ENCODE measurements at regions of chr2 and their contacts with region 1.

Region 1: GRCh38 chr2:127081826-127082633 is 24.9 kb downstream of the BIN1 start:
- DNase-seq: peak; percentile 87
- H3K4me3 Mint-ChIP-seq: peak overlapping the region; percentile 88
- H3K27ac Mint-ChIP-seq: peak overlapping the region; percentile 92
- H3K4me1 Mint-ChIP-seq: peaks cover 83% of the 10 kb centered on the region
- H3K27me3 Mint-ChIP-seq: no peaks in the 10 kb centered on the region

Region 2: DNA sequence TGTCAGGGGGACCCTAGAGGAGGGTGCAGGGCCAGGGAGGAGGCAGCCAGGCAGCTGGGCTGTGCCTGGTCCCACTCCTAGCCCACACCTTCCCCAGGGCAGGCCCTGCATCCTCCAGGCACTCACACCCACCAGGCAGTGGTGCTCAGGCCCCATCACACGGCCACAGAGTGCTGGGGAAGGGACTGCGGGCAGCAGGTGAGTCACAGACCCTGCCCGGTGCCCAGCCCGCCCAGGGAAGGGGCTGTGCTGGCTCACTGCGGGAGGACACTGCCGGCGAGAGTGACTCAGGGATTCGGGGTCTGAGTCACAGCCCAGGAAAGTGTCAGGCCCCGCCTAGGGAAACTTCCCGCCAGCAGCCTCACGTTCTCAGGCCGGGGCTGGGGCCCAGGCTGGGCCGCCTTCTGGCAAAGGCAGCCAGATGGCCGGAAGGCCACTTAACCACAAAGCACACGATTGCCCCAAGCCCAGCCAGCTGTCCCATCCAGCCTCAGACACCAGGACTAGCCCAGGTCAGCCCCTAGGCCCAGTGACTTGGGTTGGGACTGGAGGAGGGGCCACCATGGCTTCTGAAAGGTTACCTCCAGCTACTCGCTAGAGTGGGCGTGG is 17.3 kb before region 1 on chr2:
- CTCF ChIA-PET with region 1: interaction called, 101 read pairs
- POLR2A ChIA-PET with region 1: no interaction called
- DNase-seq: peak; percentile 46
- H3K4me3 Mint-ChIP-seq: no peak overlapping the region
- H3K27ac Mint-ChIP-seq: no peak overlapping the region
- H3K4me1 Mint-ChIP-seq: peaks cover 13% of the 10 kb centered on the region
- H3K27me3 Mint-ChIP-seq: no peaks in the 10 kb centered on the region

Region 3: DNA sequence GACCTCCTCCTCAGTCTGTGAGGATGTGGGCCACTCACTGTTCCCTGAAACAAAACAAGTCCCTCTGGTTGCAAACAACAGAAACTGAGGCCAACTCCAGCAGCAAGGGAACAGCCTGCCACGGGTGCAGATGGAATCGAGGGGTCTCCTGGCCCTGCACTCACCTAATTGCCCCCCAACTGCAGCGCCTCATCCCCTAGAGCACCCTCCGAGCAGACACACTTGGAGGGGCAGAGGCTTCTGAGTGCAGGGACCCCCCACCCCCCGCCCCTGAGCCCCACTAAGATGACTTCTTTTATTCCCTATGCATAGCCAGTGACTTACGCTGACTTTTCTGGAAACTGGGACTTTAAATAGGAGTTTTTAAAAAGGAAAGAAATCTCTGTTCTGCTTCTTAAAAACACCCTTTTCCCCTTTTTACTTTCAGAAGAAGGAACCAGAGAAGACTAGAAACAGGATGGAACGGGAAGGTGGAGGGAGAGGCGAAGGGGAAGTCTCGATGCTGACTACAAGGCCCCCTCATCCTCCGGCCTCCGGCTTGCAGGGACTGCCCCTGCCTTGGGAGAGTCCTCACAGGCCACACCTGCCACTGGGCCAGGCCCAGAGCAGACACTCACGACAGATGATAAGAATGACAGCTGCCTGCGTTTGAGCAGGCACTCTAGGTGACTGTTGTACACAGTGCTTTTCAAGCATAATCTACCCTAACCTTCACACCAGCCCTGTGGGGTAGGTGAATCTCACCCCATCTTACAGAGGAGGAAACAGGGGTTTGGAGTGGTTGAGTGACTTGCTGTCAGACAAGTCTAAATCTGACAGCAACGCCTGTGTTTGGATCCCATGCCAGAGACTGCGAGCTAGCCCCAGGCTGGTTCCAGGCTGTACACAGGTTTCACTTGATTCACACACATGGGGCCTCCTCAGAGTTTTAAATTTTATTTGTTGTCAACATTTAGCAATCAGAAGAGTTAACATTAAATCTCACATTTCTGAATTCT is 53.1 kb after region 1 on chr2:
- CTCF ChIA-PET with region 1: no interaction called
- POLR2A ChIA-PET with region 1: no interaction called
- DNase-seq: no peak
- H3K4me3 Mint-ChIP-seq: no peak overlapping the region
- H3K27ac Mint-ChIP-seq: no peak overlapping the region
- H3K4me1 Mint-ChIP-seq: no peaks in the 10 kb centered on the region
- H3K27me3 Mint-ChIP-seq: peaks cover 6% of the 10 kb centered on the region

Region 4: GRCh38 chr2:127379712-127380355 is 297.8 kb after region 1 on chr2:
- CTCF ChIA-PET with region 1: no interaction called
- POLR2A ChIA-PET with region 1: no interaction called
- DNase-seq: no peak
- H3K4me3 Mint-ChIP-seq: no peak overlapping the region
- H3K27ac Mint-ChIP-seq: no peak overlapping the region
- H3K4me1 Mint-ChIP-seq: peaks cover 41% of the 10 kb centered on the region
- H3K27me3 Mint-ChIP-seq: no peaks in the 10 kb centered on the region

Region 5: DNA sequence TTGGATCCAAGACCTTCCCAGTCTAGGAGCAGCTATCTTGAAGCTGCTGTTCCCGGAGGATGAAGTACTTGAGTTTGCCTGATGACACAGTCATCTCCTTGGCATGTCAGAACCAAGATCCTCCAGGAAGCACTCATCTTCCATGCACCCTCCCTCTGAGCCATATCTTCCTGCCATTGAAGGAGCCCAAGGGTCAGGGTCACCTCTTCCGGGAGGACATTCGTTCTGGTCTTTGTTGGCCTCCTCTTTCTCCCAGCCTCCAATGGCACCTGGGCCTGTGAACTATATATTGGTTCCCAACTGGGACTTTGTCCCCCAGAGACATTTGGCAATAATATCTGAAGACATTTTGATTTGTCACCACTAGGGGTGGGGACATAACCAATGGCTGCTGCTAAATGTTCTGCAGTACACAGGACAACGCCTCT is 449.2 kb after region 1 on chr2:
- CTCF ChIA-PET with region 1: no interaction called
- POLR2A ChIA-PET with region 1: no interaction called
- DNase-seq: no peak
- H3K4me3 Mint-ChIP-seq: no peak overlapping the region
- H3K27ac Mint-ChIP-seq: no peak overlapping the region
- H3K4me1 Mint-ChIP-seq: peaks cover 12% of the 10 kb centered on the region
- H3K27me3 Mint-ChIP-seq: peaks cover 9% of the 10 kb centered on the region

Measured in activated CD4-positive, alpha-beta T cell treated with anti-CD3 and anti-CD28 coated beads, Interleukin-2, amount 10 ng/mL, durations not matched to agents 7 days and 5 days (primary cell).